Calu3 (cell line): ENCODE measurements at regions of chr4 and their contacts with region 1.

Region 1: GRCh38 chr4:52028969-52029368 is 8.8 kb upstream of the LRRC66 start:
- DNase-seq: no peak
- H3K4me3 Mint-ChIP-seq: no peak overlapping the region
- H3K27ac Mint-ChIP-seq: no peak overlapping the region
- H3K4me1 Mint-ChIP-seq: no peaks in the 10 kb centered on the region
- H3K27me3 Mint-ChIP-seq: no peaks in the 10 kb centered on the region
- CTCF ChIP-seq: no peak

Region 2: GRCh38 chr4:51842554-51843308 is 186.2 kb before region 1 on chr4 and contains the start of gene DCUN1D4:
- CTCF ChIA-PET with region 1: no interaction called
- intact Hi-C with region 1: loop called (anchors 5 kb)
- DNase-seq: peak; percentile 98
- H3K4me3 Mint-ChIP-seq: peak within 1 kb of the TSS; percentile 89
- H3K27ac Mint-ChIP-seq: peak within 1 kb of the TSS; percentile 91
- H3K4me1 Mint-ChIP-seq: no peaks in the 10 kb centered on the region
- H3K27me3 Mint-ChIP-seq: no peaks in the 10 kb centered on the region
- CTCF ChIP-seq: no peak
- total RNA-seq, gene DCUN1D4: 40.2 and 40.3 TPM in 2 replicates

Region 3: DNA sequence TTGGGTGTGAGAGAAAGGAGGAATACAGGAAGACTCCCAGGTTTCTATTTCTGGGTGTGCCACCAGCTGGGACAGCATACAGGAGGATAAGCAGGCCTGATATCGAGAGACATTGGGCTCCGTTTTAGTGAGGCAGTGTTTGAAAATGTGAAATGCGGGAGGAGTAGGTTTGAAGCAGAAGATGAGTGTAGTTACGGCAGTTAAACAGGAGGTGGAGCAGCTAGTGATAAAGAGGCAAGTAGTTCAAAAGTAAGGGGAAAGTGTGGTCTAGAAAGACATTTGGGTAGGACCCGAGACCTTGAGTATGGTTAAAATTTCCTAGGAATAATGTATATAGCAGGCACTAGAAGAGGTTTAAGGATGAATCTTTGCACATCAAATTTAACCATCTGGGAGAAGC is 143.6 kb before region 1 on chr4:
- CTCF ChIA-PET with region 1: no interaction called
- intact Hi-C with region 1: loop called (anchors 5 kb)
- DNase-seq: peak; percentile 5
- H3K4me3 Mint-ChIP-seq: no peak overlapping the region
- H3K27ac Mint-ChIP-seq: no peak overlapping the region
- H3K4me1 Mint-ChIP-seq: peaks cover 8% of the 10 kb centered on the region
- H3K27me3 Mint-ChIP-seq: no peaks in the 10 kb centered on the region
- CTCF ChIP-seq: peak; percentile 20